Ascending aorta (tissue), 2 donors: ENCODE measurements at regions of chr4 and their contacts with region 1.

Region 1: GRCh38 chr4:76198411-76199237 is 15.0 kb downstream of the SCARB2 start:
- DNase-seq: no peak
- H3K4me3 ChIP-seq: no peak overlapping the region
- H3K27ac ChIP-seq: peak overlapping the region; percentile 71
- H3K4me1 ChIP-seq: peaks cover 10 to 54% of the 10 kb centered on the region in 2 donors
- H3K27me3 ChIP-seq: no peaks in the 10 kb centered on the region
- CTCF ChIP-seq: no peak

Region 2: DNA sequence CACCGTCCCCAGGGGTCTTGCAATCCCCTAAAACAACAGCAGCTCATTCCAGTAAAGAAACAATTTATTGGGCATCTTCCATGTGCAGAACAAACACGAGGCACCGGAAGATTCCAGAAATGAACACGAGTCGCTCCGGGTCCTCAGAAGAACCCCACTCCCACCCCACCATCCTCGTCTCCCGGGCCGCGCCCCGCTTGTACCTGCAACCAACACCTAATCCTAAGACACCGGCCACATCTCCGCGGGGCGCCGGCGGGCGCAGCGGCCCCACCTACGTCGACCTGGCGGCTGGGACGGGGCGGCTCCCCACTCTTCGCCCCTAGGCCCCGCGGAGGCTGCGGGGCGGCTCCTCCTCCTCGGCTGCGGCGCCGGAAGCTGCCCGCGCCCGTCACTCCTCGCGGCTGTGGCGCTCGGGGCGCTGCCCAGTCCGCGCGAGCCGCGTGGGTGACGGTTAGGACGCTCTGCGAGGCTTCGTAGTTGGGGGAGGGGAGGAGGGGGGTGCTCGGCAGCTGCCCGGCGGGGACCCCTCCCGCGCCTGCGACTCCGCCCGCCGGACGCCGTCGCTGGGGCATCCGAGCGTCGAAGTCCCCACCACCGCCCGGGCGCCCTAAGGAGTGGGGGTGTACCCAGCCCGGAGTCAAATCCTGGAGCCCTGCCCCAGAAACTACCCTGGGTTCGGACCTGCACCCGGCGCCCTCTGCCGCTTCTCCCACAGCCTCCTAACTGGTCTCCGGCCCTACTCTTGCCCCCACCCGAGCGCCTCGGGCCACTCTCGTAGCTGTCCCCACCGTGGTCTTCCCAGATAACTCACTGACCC is 222.3 kb after region 1 on chr4 and contains the start of gene CCDC158:
- intact Hi-C with region 1: loop called (anchors 5 kb)
- DNase-seq: no peak
- H3K4me3 ChIP-seq: peak within 1 kb of the TSS; percentile 62 to 65
- H3K27ac ChIP-seq: peak within 1 kb of the TSS in 1 of 2 donors; percentile 0
- H3K4me1 ChIP-seq: no peaks in the 10 kb centered on the region
- H3K27me3 ChIP-seq: no peaks in the 10 kb centered on the region
- CTCF ChIP-seq: no peak
- total RNA-seq, gene CCDC158: 1.1 TPM

Region 3: DNA sequence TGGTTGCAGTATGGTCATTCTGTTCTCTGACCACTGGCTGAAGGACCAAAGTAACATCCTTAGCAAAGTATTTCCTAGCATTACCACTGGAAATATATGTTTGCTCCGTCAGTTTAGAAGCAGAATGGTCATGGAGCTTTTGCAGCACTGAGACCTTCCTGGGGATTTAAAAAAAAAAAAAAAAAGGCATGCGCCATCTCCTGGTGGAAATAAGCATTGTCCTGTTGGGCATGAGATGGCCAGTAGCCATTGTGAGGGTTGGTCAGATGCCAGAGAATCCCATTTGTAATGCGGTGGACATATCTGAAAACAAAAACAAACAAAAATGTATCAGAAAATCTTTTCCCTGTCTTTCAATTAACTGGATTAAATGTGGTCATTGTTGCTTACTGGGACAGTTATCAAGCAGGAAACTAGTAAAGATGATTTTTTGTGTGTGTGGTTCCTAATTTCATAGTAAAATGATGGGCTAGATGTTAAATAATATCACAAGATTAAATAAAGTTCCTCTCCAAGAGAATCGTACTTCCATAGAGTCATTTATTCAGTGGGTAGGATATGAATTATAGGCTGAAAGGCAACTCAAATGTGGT is 559.8 kb after region 1 on chr4:
- intact Hi-C with region 1: loop called (anchors 10 kb)
- DNase-seq: no peak
- H3K4me3 ChIP-seq: no peak overlapping the region
- H3K27ac ChIP-seq: peak overlapping the region; percentile 51 to 72
- H3K4me1 ChIP-seq: peaks cover 13 to 22% of the 10 kb centered on the region in 2 donors
- H3K27me3 ChIP-seq: no peaks in the 10 kb centered on the region
- CTCF ChIP-seq: peak; percentile 51 to 78 (median 70)